MCF 10A (cell line): ENCODE measurements at regions of chr11 and their contacts with region 1.

Region 1: DNA sequence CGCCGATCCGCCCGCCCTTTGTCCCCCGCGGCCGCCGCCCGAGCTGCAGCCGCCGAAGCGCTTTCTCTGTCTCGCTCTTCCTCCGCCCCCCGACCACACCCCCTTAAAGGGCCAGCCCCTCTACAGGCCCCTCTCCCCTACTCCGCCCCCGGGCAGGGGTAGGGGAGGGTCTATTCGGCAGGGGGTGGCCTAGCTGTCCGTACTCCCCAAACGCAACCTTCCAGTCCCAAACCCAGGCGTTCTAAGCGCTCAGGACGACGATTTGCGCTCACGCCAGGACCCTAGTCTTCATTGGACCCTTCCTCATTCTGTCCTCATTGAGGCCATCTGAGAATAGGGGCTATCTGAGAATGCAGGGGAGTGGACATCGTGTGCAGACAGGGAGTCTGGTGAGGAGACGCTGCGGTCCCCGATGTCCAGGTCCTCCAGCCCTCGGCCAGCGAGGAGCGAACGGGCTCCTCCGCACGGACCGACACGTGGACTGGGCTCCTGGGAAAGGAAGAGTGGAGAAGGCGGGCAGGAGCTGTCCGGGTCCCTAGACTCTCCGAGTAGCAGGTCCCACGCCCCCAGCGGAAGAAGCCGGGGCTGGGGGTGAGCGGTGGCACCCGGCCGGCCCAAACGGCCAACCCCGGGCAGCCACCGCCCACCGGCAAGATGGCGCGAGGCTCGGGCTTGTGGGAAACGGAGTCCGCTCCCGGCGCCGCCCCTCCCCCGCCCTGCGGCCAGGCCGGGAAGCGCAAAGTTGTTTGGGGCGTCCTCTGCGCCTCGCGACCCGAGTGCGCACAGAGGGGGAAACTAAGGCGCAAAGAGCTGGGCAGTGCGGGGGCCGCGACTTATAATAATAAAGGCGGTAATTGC is at the start of gene PPP1R14B:
- DNase-seq: peak; percentile 86
- H3K4me3 Mint-ChIP-seq: peak within 1 kb of the TSS; percentile 93
- H3K27ac Mint-ChIP-seq: peak within 1 kb of the TSS; percentile 69
- H3K4me1 Mint-ChIP-seq: peaks cover 15% of the 10 kb centered on the region
- H3K27me3 Mint-ChIP-seq: no peaks in the 10 kb centered on the region
- CTCF ChIP-seq: no peak
- total RNA-seq, gene PPP1R14B: 583 and 684 TPM in 2 replicates

Region 2: GRCh38 chr11:64074239-64074638 is 172.9 kb before region 1 on chr11:
- CTCF ChIA-PET with region 1: no interaction called
- POLR2A ChIA-PET with region 1: no interaction called
- intact Hi-C with region 1: no loop called
- DNase-seq: peak; percentile 64
- H3K4me3 Mint-ChIP-seq: no peak overlapping the region
- H3K27ac Mint-ChIP-seq: no peak overlapping the region
- H3K4me1 Mint-ChIP-seq: no peaks in the 10 kb centered on the region
- H3K27me3 Mint-ChIP-seq: no peaks in the 10 kb centered on the region
- CTCF ChIP-seq: no peak

Region 3: GRCh38 chr11:64185816-64186498 is 61.1 kb before region 1 on chr11 and contains the start of gene STIP1:
- CTCF ChIA-PET with region 1: interaction called, 3 read pairs
- POLR2A ChIA-PET with region 1: interaction called, 28 read pairs
- intact Hi-C with region 1: no loop called
- DNase-seq: peak; percentile 100
- H3K4me3 Mint-ChIP-seq: no peak within 1 kb of the TSS
- H3K27ac Mint-ChIP-seq: no peak within 1 kb of the TSS
- H3K4me1 Mint-ChIP-seq: peaks cover 7% of the 10 kb centered on the region
- H3K27me3 Mint-ChIP-seq: no peaks in the 10 kb centered on the region
- CTCF ChIP-seq: peak; percentile 23
- total RNA-seq, gene STIP1: 161 and 171 TPM in 2 replicates

Region 4: DNA sequence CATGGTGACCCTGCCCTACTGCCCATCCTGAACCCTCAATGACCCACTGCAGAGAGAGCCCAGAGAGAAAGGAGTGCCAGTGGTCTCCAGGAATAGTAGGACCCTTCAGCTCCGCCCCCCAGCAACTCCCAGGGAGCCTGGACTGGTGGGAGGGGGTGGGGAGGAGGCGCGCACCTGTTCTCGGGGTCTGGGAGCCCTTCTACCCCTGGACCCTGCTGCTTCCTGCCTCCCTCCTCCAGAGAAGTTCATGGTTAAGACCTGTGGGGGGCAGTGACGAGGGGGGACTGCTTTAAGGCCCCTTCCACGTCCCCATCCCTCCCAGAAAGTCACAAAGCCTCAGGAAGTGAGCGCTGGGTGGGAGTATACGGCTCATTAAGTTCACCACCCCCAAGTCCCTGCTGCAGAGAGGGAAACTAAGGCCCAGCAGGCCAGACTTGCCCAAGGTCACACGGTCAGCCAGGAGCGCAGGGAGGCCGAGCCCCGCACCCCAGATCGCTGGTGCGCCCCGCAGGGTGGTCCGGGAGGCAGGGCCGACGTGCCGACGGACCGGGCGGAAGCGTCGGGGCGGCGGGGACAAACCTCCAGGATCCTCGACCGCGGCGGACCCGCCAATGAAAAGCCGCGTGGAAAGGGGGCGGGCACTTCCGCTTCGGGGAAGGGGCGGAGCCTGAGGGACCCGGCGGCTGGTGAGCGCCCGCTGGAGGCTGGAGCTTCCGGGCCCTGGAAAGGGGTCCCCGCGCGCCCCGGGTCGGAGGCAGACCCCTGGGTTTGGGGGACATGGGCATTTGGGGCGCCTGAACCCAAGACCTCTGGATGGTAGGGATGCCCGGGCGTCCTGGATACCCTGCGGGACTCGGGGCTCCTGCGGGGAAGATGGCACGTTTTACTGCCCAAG is 21.2 kb before region 1 on chr11 and contains the starts of genes NUDT22 and TRPT1:
- CTCF ChIA-PET with region 1: interaction called, 13 read pairs
- POLR2A ChIA-PET with region 1: interaction called, 122 read pairs
- intact Hi-C with region 1: no loop called
- DNase-seq: peak; percentile 79
- H3K4me3 Mint-ChIP-seq: peak within 1 kb of the TSS; percentile 80
- H3K27ac Mint-ChIP-seq: peak within 1 kb of the TSS; percentile 80
- H3K4me1 Mint-ChIP-seq: peaks cover 8% of the 10 kb centered on the region
- H3K27me3 Mint-ChIP-seq: no peaks in the 10 kb centered on the region
- CTCF ChIP-seq: peak; percentile 31
- total RNA-seq, gene NUDT22: 51.0 and 73.6 TPM in 2 replicates
- total RNA-seq, gene TRPT1: 27.0 and 31.3 TPM in 2 replicates

Region 5: GRCh38 chr11:64276653-64277431 is 29.7 kb after region 1 on chr11:
- CTCF ChIA-PET with region 1: interaction called, 7 read pairs
- POLR2A ChIA-PET with region 1: interaction called, 75 read pairs
- intact Hi-C with region 1: no loop called
- DNase-seq: peak; percentile 90
- H3K4me3 Mint-ChIP-seq: peak overlapping the region; percentile 14
- H3K27ac Mint-ChIP-seq: peak overlapping the region; percentile 79
- H3K4me1 Mint-ChIP-seq: peaks cover 4% of the 10 kb centered on the region
- H3K27me3 Mint-ChIP-seq: no peaks in the 10 kb centered on the region
- CTCF ChIP-seq: no peak

Region 6: GRCh38 chr11:64317957-64318693 is 71.0 kb after region 1 on chr11 and contains the start of gene PRDX5:
- CTCF ChIA-PET with region 1: interaction called, 4 read pairs
- POLR2A ChIA-PET with region 1: interaction called, 23 read pairs
- intact Hi-C with region 1: no loop called
- DNase-seq: peak; percentile 96
- H3K4me3 Mint-ChIP-seq: peak within 1 kb of the TSS; percentile 86
- H3K27ac Mint-ChIP-seq: peak within 1 kb of the TSS; percentile 93
- H3K4me1 Mint-ChIP-seq: peaks cover 36% of the 10 kb centered on the region
- H3K27me3 Mint-ChIP-seq: no peaks in the 10 kb centered on the region
- CTCF ChIP-seq: no peak
- total RNA-seq, gene PRDX5: 274 and 302 TPM in 2 replicates

Region 7: DNA sequence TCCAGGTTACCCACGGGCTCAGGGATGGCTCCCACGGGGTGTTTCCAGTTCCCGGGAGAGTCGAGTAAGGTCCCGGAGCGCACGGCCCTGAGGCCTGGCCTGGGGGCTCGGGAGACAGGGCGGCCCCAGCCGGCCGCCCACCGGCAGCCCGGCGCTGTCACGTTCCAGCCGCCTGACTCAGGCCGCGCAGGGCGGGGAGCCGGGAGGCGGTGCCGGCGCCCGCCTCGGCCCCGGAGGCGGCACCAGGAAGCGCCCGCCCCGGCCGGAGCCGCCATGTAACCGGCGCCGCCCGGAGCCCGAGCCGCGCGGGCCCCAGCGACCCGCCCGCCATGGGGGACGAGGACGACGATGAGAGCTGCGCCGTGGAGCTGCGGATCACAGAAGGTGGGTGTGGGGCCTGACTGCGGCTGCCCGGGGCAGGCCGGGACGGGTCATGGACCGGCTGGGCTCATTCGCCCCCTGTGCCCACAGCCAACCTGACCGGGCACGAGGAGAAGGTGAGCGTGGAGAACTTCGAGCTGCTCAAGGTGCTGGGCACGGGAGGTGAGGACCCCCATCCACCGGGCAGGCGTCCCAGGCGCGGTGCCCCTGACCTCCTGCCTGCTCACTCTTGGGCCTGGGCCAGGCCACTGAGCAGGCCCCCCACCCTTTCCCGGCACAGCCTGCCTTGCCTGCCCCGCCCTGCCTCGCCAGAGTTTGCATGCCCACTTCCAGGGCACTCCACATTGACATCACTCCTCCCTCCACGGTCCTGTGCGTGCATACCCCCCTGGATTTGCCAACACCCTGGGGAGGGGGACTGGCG is 112.0 kb after region 1 on chr11 and contains the start of gene RPS6KA4:
- CTCF ChIA-PET with region 1: interaction called, 6 read pairs
- POLR2A ChIA-PET with region 1: interaction called, 5 read pairs
- intact Hi-C with region 1: loop called (anchors 5 kb)
- DNase-seq: peak; percentile 58
- H3K4me3 Mint-ChIP-seq: peak within 1 kb of the TSS; percentile 82
- H3K27ac Mint-ChIP-seq: peak within 1 kb of the TSS; percentile 8
- H3K4me1 Mint-ChIP-seq: peaks cover 35% of the 10 kb centered on the region
- H3K27me3 Mint-ChIP-seq: no peaks in the 10 kb centered on the region
- CTCF ChIP-seq: no peak
- total RNA-seq, gene RPS6KA4: 42.5 and 46.5 TPM in 2 replicates